CD4-positive, alpha-beta T cell (primary cell): ENCODE measurements at regions of chr7 and their contacts with region 1.

Region 1: GRCh38 chr7:73647725-73648592 is 19.7 kb upstream of the VPS37D start:
- DNase-seq: peak in 8 of 14 experiments; percentile 11 to 71 (median 34)
- ATAC-seq: peak; percentile 85
- H3K4me3 ChIP-seq: peak overlapping the region; percentile 7
- H3K4me3 Mint-ChIP-seq: peak overlapping the region; percentile 34
- H3K27ac ChIP-seq: no peak overlapping the region
- H3K27ac Mint-ChIP-seq: no peak overlapping the region
- H3K4me1 ChIP-seq: peaks cover 10% of the 10 kb centered on the region
- H3K4me1 Mint-ChIP-seq: peaks cover 6% of the 10 kb centered on the region
- H3K27me3 ChIP-seq: peaks cover 46 to 63% of the 10 kb centered on the region in 2 experiments
- H3K27me3 Mint-ChIP-seq: peaks cover 80% of the 10 kb centered on the region
- CTCF ChIP-seq: no peak

Region 2: DNA sequence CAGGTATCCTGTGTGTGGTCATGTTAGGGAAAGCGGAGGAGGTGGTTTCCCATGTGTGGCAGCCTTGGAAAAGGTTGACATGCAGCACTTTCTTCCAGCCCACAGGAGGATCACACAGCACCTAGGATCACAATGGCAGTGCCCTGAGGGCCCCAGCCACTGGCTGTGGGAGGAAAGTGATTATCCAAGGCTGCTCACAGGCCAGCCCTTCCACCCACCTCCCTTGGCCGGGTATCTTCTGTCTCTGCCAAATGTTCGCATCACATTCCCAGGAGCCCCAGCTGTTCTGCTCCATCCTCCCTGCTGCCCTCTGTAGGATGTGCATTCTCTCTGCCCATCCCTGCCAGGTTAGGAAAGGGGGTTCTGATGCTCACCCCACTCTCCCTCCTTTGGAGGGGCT is 21.1 kb before region 1 on chr7:
- CTCF ChIA-PET with region 1: no interaction called
- POLR2A ChIA-PET with region 1: no interaction called
- intact Hi-C with region 1: no loop called
- DNase-seq: no peak
- ATAC-seq: no peak
- H3K4me3 ChIP-seq: no peak overlapping the region
- H3K4me3 Mint-ChIP-seq: no peak overlapping the region
- H3K27ac ChIP-seq: no peak overlapping the region
- H3K27ac Mint-ChIP-seq: no peak overlapping the region
- H3K4me1 ChIP-seq: peaks cover 16% of the 10 kb centered on the region
- H3K4me1 Mint-ChIP-seq: peaks cover 13% of the 10 kb centered on the region
- H3K27me3 ChIP-seq: peaks cover 42 to 50% of the 10 kb centered on the region in 2 experiments
- H3K27me3 Mint-ChIP-seq: peaks cover 76% of the 10 kb centered on the region
- CTCF ChIP-seq: no peak

Region 3: DNA sequence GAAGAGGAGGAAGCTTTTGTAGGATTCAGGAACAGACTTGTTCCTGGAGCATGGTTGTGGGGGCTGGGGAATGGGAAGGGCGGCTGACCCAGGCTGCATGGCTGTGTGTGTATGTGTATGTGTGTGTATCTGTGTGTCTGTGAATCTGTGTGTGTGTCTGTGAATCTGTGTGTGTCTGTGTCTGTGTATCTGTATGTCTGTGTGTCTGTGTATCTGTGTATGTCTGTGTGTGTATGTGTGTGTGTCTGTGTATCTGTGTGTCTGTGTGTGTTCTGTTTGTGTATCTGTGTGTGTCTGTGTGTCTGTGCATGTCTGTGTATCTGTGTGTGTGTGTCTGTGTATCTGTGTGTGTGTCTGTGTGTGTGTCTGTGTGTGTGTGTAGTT is 78.1 kb after region 1 on chr7:
- CTCF ChIA-PET with region 1: no interaction called
- POLR2A ChIA-PET with region 1: no interaction called
- intact Hi-C with region 1: loop called in 1 of 2 experiments (anchors 5 kb)
- DNase-seq: no peak
- ATAC-seq: peak; percentile 7
- H3K4me3 ChIP-seq: no peak overlapping the region
- H3K4me3 Mint-ChIP-seq: no peak overlapping the region
- H3K27ac ChIP-seq: no peak overlapping the region
- H3K27ac Mint-ChIP-seq: no peak overlapping the region
- H3K4me1 ChIP-seq: peaks cover 6% of the 10 kb centered on the region
- H3K4me1 Mint-ChIP-seq: no peaks in the 10 kb centered on the region
- H3K27me3 ChIP-seq: peaks cover 6 to 11% of the 10 kb centered on the region in 2 experiments
- H3K27me3 Mint-ChIP-seq: peaks cover 9% of the 10 kb centered on the region
- CTCF ChIP-seq: peak; percentile 26

Region 4: GRCh38 chr7:74334030-74334429 is 686.1 kb after region 1 on chr7:
- CTCF ChIA-PET with region 1: no interaction called
- POLR2A ChIA-PET with region 1: no interaction called
- intact Hi-C with region 1: no loop called
- DNase-seq: no peak
- ATAC-seq: no peak
- H3K4me3 ChIP-seq: no peak overlapping the region
- H3K4me3 Mint-ChIP-seq: no peak overlapping the region
- H3K27ac ChIP-seq: no peak overlapping the region
- H3K27ac Mint-ChIP-seq: no peak overlapping the region
- H3K4me1 ChIP-seq: no peaks in the 10 kb centered on the region
- H3K4me1 Mint-ChIP-seq: no peaks in the 10 kb centered on the region
- H3K27me3 ChIP-seq: no peaks in the 10 kb centered on the region
- H3K27me3 Mint-ChIP-seq: no peaks in the 10 kb centered on the region
- CTCF ChIP-seq: no peak